ENCODE measurements at regions of chr1 and their contacts with region 1.

Region 1: GRCh38 chr1:54714881-54715492 is 674 bp upstream of the TTC4 start:
- DNase-seq: no peak
- ATAC-seq: peak in 1 of 2 donors; percentile 23
- H3K4me3 ChIP-seq: peak overlapping the region; percentile 90
- H3K27ac ChIP-seq: peak overlapping the region; percentile 56
- H3K4me1 ChIP-seq: no peaks in the 10 kb centered on the region
- H3K27me3 ChIP-seq: no peaks in the 10 kb centered on the region

Region 2: GRCh38 chr1:54591127-54591756 is 123.7 kb before region 1 on chr1:
- intact Hi-C with region 1: no loop called
- DNase-seq: peak in 1 of 3 donors; percentile 15
- ATAC-seq: no peak
- H3K4me3 ChIP-seq: no peak overlapping the region
- H3K27ac ChIP-seq: no peak overlapping the region
- H3K4me1 ChIP-seq: peaks cover 4% of the 10 kb centered on the region
- H3K27me3 ChIP-seq: no peaks in the 10 kb centered on the region

Region 3: GRCh38 chr1:54754486-54755285 is 39.7 kb after region 1 on chr1:
- intact Hi-C with region 1: loop called in 1 of 4 experiments (anchors 5 kb)
- DNase-seq: no peak
- ATAC-seq: peak; percentile 31 to 32
- H3K4me3 ChIP-seq: no peak overlapping the region
- H3K27ac ChIP-seq: no peak overlapping the region
- H3K4me1 ChIP-seq: no peaks in the 10 kb centered on the region
- H3K27me3 ChIP-seq: no peaks in the 10 kb centered on the region

Region 4: GRCh38 chr1:55081188-55081904 is 366.4 kb after region 1 on chr1:
- intact Hi-C with region 1: no loop called
- DNase-seq: no peak
- ATAC-seq: no peak
- H3K4me3 ChIP-seq: no peak overlapping the region
- H3K27ac ChIP-seq: peak overlapping the region; percentile 32
- H3K4me1 ChIP-seq: no peaks in the 10 kb centered on the region
- H3K27me3 ChIP-seq: no peaks in the 10 kb centered on the region